IMR-90 (cell line): ENCODE measurements at regions of chr22 and their contacts with region 1.

Region 1: GRCh38 chr22:41446639-41447434 is at the start of gene TOB2:
- DNase-seq: peak; percentile 95
- ATAC-seq: peak; percentile 63
- H3K4me3 ChIP-seq: peak within 1 kb of the TSS; percentile 97
- H3K27ac ChIP-seq: peak within 1 kb of the TSS; percentile 97
- H3K4me1 ChIP-seq: peaks cover 3% of the 10 kb centered on the region
- H3K27me3 ChIP-seq: no peaks in the 10 kb centered on the region
- CTCF ChIP-seq: no peak
- POLR2A ChIP-seq: peak; percentile 99
- RAD21 ChIP-seq: peak; percentile 29; the same call in 1 of the 2 replicates
- total RNA-seq, gene TOB2: 16.9 and 17.4 TPM in 2 replicates

Region 2: GRCh38 chr22:41285820-41286638 is 160.8 kb before region 1 on chr22 and contains the start of gene RANGAP1:
- CTCF ChIA-PET with region 1: no interaction called
- POLR2A ChIA-PET with region 1: no interaction called
- dilution Hi-C with region 1: no loop called
- in situ Hi-C with region 1: no loop called
- intact Hi-C with region 1: loop called (anchors 1 kb)
- DNase-seq: peak; percentile 98
- ATAC-seq: peak; percentile 87
- H3K4me3 ChIP-seq: peak within 1 kb of the TSS; percentile 55
- H3K27ac ChIP-seq: peak within 1 kb of the TSS; percentile 81
- H3K4me1 ChIP-seq: peaks cover 24% of the 10 kb centered on the region
- H3K27me3 ChIP-seq: no peaks in the 10 kb centered on the region
- CTCF ChIP-seq: peak; percentile 25; the same call in 1 of the 2 replicates
- POLR2A ChIP-seq: peak; percentile 95
- RAD21 ChIP-seq: no peak
- total RNA-seq, gene RANGAP1: 71.2 and 74.4 TPM in 2 replicates

Region 3: GRCh38 chr22:41381329-41382097 is 65.3 kb before region 1 on chr22 and contains the start of gene TEF:
- CTCF ChIA-PET with region 1: no interaction called
- POLR2A ChIA-PET with region 1: interaction called, 9 read pairs
- dilution Hi-C with region 1: no loop called
- in situ Hi-C with region 1: no loop called
- intact Hi-C with region 1: loop called (anchors 2 kb)
- DNase-seq: peak; percentile 98
- ATAC-seq: peak; percentile 88
- H3K4me3 ChIP-seq: peak within 1 kb of the TSS; percentile 64
- H3K27ac ChIP-seq: peak within 1 kb of the TSS; percentile 86
- H3K4me1 ChIP-seq: peaks cover 9% of the 10 kb centered on the region
- H3K27me3 ChIP-seq: no peaks in the 10 kb centered on the region
- CTCF ChIP-seq: no peak
- POLR2A ChIP-seq: peak; percentile 52
- RAD21 ChIP-seq: no peak
- total RNA-seq, gene TEF: 5.6 and 6.1 TPM in 2 replicates

Region 4: DNA sequence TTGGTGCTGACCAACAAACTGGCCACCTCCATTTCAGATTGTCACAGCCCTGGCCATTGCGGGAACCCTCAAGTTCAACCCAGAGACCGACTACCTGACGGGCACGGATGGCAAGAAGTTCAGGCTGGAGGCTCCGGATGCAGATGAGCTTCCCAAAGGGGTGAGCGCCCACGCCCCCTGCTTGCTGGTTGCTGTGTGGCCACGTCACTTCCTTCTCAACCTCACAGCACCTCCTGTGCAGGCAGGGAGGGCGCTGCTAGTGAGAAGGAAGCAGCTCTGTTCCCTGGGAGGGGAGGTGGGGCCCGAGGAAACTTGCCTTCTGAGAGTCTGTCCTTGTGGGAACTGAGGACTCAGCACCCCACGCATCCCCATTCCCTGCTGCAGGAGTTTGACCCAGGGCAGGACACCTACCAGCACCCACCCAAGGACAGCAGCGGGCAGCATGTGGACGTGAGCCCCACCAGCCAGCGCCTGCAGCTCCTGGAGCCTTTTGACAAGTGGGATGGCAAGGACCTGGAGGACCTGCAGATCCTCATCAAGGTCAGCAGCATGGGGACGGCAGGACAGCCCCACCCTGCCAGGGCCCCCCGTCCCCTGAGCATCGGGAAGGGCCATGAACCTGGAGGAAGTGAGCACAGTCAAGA is 78.1 kb after region 1 on chr22:
- CTCF ChIA-PET with region 1: no interaction called
- POLR2A ChIA-PET with region 1: no interaction called
- dilution Hi-C with region 1: no loop called
- in situ Hi-C with region 1: no loop called
- intact Hi-C with region 1: loop called (anchors 1 kb)
- DNase-seq: no peak
- ATAC-seq: no peak
- H3K4me3 ChIP-seq: no peak overlapping the region
- H3K27ac ChIP-seq: peak overlapping the region; percentile 94
- H3K4me1 ChIP-seq: peaks cover 25% of the 10 kb centered on the region
- H3K27me3 ChIP-seq: no peaks in the 10 kb centered on the region
- CTCF ChIP-seq: no peak
- POLR2A ChIP-seq: no peak
- RAD21 ChIP-seq: no peak